PC-9 (cell line): ENCODE measurements at regions of chr5 and their contacts with region 1.

Region 1: DNA sequence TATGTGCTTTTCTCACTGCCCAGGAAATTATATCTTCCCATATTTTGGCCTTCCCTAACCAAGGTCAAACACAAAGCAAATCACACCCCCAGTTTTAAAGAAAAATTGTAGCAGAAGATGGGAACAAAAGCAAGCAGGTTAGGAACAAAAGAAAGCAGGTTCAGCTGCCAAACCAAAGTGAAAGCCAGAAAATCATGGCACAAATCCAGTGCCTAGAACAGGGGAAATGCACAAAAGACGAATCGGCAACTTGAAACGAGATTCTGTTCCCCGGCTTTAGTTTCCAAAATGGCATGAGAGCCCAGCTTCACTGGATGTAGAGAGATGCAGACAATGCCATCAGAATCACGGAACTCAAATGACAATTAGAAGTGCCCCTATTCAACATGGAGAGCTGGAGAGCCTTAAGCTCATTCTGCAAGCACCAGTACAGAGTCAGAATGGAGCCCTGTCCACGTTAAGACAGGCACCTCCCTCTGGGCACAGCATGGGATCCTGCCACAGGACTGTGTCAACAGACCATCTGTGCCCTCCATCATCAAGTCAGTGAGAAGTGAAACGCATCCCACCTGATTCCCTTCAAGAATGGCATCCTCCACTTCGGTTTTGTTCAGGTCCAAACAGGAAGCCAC is 13.8 kb downstream of the DNAH5 start:
- DNase-seq: no peak
- H3K4me3 ChIP-seq: no peak overlapping the region
- H3K27ac ChIP-seq: no peak overlapping the region
- H3K4me1 ChIP-seq: no peaks in the 10 kb centered on the region
- H3K27me3 ChIP-seq: no peaks in the 10 kb centered on the region
- CTCF ChIP-seq: no peak

Region 2: GRCh38 chr5:13878357-13878756 is 52.3 kb before region 1 on chr5:
- CTCF ChIA-PET with region 1: no interaction called
- POLR2A ChIA-PET with region 1: interaction called, 12 read pairs
- intact Hi-C with region 1: no loop called
- DNase-seq: no peak
- H3K4me3 ChIP-seq: no peak overlapping the region
- H3K27ac ChIP-seq: no peak overlapping the region
- H3K4me1 ChIP-seq: no peaks in the 10 kb centered on the region
- H3K27me3 ChIP-seq: no peaks in the 10 kb centered on the region
- CTCF ChIP-seq: no peak; the same call in 1 of the 2 replicates

Region 3: GRCh38 chr5:13944560-13945199 is 14.0 kb after region 1 on chr5 and contains the start of gene DNAH5:
- CTCF ChIA-PET with region 1: no interaction called
- POLR2A ChIA-PET with region 1: no interaction called
- intact Hi-C with region 1: loop called (anchors 2 kb)
- DNase-seq: no peak
- H3K4me3 ChIP-seq: no peak within 1 kb of the TSS
- H3K27ac ChIP-seq: no peak within 1 kb of the TSS
- H3K4me1 ChIP-seq: no peaks in the 10 kb centered on the region
- H3K27me3 ChIP-seq: no peaks in the 10 kb centered on the region
- CTCF ChIP-seq: no peak
- total RNA-seq, gene DNAH5: 9.5 and 9.7 TPM in 2 replicates

Region 4: GRCh38 chr5:14379739-14380497 is 449.3 kb after region 1 on chr5:
- CTCF ChIA-PET with region 1: no interaction called
- POLR2A ChIA-PET with region 1: no interaction called
- intact Hi-C with region 1: no loop called
- DNase-seq: no peak
- H3K4me3 ChIP-seq: no peak overlapping the region
- H3K27ac ChIP-seq: no peak overlapping the region
- H3K4me1 ChIP-seq: no peaks in the 10 kb centered on the region
- H3K27me3 ChIP-seq: no peaks in the 10 kb centered on the region
- CTCF ChIP-seq: no peak